ENCODE measurements at regions of chr15 and their contacts with region 1.

Region 1: GRCh38 chr15:24761704-24762302 is 86.2 kb downstream of the NPAP1 start:
- DNase-seq: no peak
- H3K4me3 ChIP-seq: no peak overlapping the region
- H3K27ac ChIP-seq: no peak overlapping the region
- H3K4me1 ChIP-seq: no peaks in the 10 kb centered on the region
- H3K27me3 ChIP-seq: no peaks in the 10 kb centered on the region
- CTCF ChIP-seq: peak in 3 of 11 experiments; percentile 15 to 30 (median 25)
- POLR2A ChIP-seq: no peak

Region 2: GRCh38 chr15:25501828-25502446 is 740.1 kb after region 1 on chr15:
- intact Hi-C with region 1: loop called (anchors 5 kb)
- DNase-seq: no peak
- H3K4me3 ChIP-seq: no peak overlapping the region
- H3K27ac ChIP-seq: no peak overlapping the region
- H3K4me1 ChIP-seq: no peaks in the 10 kb centered on the region
- H3K27me3 ChIP-seq: no peaks in the 10 kb centered on the region
- CTCF ChIP-seq: peak in 10 of 11 experiments; percentile 28 to 71 (median 49)
- POLR2A ChIP-seq: no peak